Right lobe of liver (tissue), 6 donors: ENCODE measurements at regions of chr1 and their contacts with region 1.

Region 1: DNA sequence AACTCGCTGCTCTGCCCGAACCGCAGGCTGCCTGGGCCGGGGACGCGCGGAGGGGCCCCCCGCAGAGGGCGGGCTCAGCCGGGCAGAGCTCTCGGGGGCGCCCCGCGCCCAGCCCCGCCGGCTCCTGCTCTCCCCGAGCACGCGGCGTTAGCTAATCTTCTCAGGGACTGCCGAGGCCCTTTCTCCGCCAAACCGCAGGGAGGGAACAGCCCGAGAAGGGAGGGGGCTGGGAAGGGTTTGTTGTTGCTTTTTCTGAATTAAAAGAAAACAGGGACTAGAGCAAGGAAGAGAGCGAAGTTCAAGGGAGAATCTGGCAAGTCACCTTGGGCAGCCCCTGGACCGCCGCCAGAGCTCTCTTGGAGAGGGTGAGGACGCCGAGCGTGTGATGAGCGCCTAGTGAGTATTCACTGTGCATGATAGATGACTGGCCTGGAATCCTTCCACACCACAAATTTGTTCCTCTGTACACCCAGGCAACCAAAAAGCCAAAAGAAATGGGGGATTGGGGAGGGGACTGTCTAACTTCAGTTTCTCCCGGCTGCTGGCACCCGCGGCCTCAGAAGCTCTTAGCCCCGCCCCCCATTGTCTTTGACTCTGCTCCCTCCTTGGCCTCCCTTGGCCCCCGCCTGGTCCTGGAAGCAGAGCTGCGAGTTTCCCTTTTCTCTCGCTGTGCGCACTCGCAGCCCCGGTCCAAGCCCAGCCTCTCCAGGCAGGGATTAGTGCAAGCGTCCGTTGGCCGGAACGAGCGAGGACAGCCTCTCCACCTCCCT is 19.7 kb upstream of the LMX1A start:
- DNase-seq: peak; percentile 58 to 75 (median 75)
- ATAC-seq: peak; percentile 84 to 95 (median 88)
- H3K4me3 ChIP-seq: peak overlapping the region; percentile 9 to 36 (median 14)
- H3K27ac ChIP-seq: peak overlapping the region; percentile 3 to 55 (median 13)
- H3K4me1 ChIP-seq: peaks cover 0 to 10% (median under 1%) of the 10 kb centered on the region in 4 donors
- H3K27me3 ChIP-seq: no peaks in the 10 kb centered on the region
- CTCF ChIP-seq: no peak
- POLR2A ChIP-seq: no peak

Region 2: DNA sequence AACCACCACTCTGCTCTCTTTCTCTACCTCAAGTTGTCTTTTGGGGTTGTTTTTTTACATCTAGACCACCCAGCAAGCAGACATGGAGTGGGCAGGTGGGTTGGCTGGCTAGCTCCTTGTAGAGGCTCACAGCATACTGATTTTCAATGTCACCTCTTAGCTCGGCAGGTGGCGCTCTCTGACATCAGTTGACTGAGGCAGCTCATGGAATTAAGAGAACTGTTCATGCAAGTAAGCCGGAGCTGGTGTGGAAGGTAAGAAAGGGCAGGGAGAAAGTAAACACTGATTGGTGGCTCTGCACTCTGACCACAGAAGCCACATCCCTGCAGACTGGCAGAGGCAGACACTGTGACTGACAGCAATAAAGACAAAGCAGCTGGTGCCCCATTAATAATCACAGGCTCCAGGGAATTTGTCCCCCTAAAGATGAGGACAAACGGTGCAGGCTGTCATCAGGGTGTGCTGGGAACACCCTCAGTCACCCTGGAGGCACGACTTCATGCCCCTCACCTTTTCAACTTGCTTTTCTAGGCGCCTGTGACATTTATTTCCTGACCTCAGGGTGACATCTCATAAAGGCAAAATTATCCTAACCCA is 246.6 kb before region 1 on chr1:
- intact Hi-C with region 1: loop called in 1 of 2 experiments (anchors 10 kb)
- DNase-seq: peak; percentile 71 to 78 (median 75)
- ATAC-seq: peak; percentile 87 to 95 (median 92)
- H3K4me3 ChIP-seq: no peak overlapping the region
- H3K27ac ChIP-seq: no peak overlapping the region
- H3K4me1 ChIP-seq: no peaks in the 10 kb centered on the region
- H3K27me3 ChIP-seq: peaks cover 0 to 8% of the 10 kb centered on the region in 2 donors
- CTCF ChIP-seq: peak; percentile 47 to 74 (median 54)
- POLR2A ChIP-seq: no peak